ENCODE measurements at regions of chr9 and their contacts with region 1.

Region 1: GRCh38 chr9:33202552-33203201 is 35.5 kb upstream of the B4GALT1 start:
- H3K4me3 ChIP-seq: no peak overlapping the region
- H3K27ac ChIP-seq: no peak overlapping the region
- H3K4me1 ChIP-seq: no peaks in the 10 kb centered on the region
- CTCF ChIP-seq: no peak

Region 2: DNA sequence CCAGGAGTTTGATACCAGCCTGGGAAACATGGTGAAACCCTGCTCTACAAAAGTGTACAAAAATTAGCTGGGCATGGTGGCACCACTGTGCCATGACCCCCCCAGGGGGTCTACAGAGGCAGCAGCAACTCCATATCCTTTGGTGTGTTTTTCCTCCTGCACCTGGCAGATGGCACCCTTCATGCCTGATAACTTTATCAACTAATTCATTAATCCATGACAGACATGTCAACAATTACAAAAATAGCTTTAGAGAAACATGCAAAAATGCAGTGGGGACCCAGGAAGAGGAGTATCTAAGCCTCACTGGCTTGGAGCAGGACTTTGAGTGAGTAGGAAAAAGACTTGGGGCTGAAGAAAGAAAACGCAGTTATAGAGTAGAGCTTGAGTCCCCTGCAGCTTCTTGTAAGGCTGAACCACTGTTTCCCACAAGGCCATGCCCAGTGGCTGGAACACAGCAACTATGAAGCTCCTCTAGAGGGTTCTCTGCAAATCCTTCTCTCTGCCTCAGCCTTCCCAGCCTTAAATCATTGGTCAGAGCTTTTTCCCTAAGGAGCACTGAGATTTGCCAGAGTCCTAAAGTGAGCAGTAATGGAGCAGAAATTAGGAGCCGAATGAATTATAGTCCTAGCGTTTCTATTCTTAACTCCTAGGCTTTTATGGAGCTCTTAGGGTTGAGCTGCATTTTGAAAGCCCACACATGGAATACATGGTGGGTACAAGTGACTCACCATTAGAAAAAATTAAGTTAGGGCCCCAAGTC is 10.0 kb before region 1 on chr9:
- CTCF ChIA-PET with region 1: interaction called, 11 read pairs
- POLR2A ChIA-PET with region 1: no interaction called
- H3K4me3 ChIP-seq: no peak overlapping the region
- H3K27ac ChIP-seq: no peak overlapping the region
- H3K4me1 ChIP-seq: no peaks in the 10 kb centered on the region
- CTCF ChIP-seq: no peak

Region 3: GRCh38 chr9:33415501-33416038 is 212.9 kb after region 1 on chr9:
- CTCF ChIA-PET with region 1: no interaction called
- POLR2A ChIA-PET with region 1: no interaction called
- H3K4me3 ChIP-seq: no peak overlapping the region
- H3K27ac ChIP-seq: no peak overlapping the region
- H3K4me1 ChIP-seq: 0 out of 2 replicates have a peak, but pooled peaks cover 3% of the 10 kb centered on the region
- CTCF ChIP-seq: peak; percentile 72